ENCODE measurements at regions of chr11 and their contacts with region 1.

Region 1: GRCh38 chr11:130390071-130390758 is 38.2 kb downstream of the ADAMTS8 start:
- DNase-seq: peak; percentile 71
- H3K4me3 ChIP-seq: no peak overlapping the region
- H3K27ac ChIP-seq: no peak overlapping the region
- H3K27me3 ChIP-seq: peaks cover 37% of the 10 kb centered on the region
- CTCF ChIP-seq: peak; percentile 73

Region 2: GRCh38 chr11:130213143-130213978 is 176.9 kb before region 1 on chr11:
- in situ Hi-C with region 1: loop called (anchors 25 kb)
- DNase-seq: no peak
- H3K4me3 ChIP-seq: no peak overlapping the region
- H3K27ac ChIP-seq: no peak overlapping the region
- H3K27me3 ChIP-seq: peaks cover 31% of the 10 kb centered on the region
- CTCF ChIP-seq: peak; percentile 91

Region 3: DNA sequence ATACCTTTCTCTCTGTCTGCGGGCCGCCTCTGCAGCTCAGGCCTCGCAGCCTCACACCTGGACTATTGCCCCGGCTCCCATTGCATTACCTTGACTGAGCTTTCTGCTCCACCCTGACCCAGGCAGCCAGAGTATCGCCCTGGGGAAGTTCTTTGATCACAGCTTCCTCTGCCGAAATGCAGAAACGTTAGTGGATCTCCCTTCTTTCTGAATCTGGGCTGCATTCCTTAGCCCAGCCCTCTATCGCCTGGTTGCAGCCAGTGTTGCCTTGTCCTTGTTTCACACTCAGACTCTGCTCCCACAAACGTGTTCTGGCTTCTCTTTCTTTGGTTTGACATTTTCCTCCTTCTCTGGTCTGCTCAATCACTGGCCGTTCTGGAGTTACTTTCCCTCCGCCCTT is 254.0 kb after region 1 on chr11:
- in situ Hi-C with region 1: no loop called
- DNase-seq: no peak
- H3K4me3 ChIP-seq: no peak overlapping the region
- H3K27ac ChIP-seq: no peak overlapping the region
- H3K27me3 ChIP-seq: no peaks in the 10 kb centered on the region
- CTCF ChIP-seq: no peak

Measured in brain microvascular endothelial cell (primary cell).